ENCODE measurements at regions of chr2 and their contacts with region 1.

Region 1: GRCh38 chr2:17851731-17852585 is 26.5 kb upstream of the KCNS3 start:
- DNase-seq: no peak
- ATAC-seq: peak; percentile 92
- H3K4me3 ChIP-seq: no peak overlapping the region
- H3K27ac ChIP-seq: no peak overlapping the region
- H3K4me1 ChIP-seq: no peaks in the 10 kb centered on the region
- H3K27me3 ChIP-seq: no peaks in the 10 kb centered on the region; a peak in 1 of 4 replicates
- CTCF ChIP-seq: peak; percentile 88 to 90 (median 89)
- EP300 ChIP-seq: no peak
- POLR2A ChIP-seq: no peak
- RAD21 ChIP-seq: peak; percentile 93

Region 2: DNA sequence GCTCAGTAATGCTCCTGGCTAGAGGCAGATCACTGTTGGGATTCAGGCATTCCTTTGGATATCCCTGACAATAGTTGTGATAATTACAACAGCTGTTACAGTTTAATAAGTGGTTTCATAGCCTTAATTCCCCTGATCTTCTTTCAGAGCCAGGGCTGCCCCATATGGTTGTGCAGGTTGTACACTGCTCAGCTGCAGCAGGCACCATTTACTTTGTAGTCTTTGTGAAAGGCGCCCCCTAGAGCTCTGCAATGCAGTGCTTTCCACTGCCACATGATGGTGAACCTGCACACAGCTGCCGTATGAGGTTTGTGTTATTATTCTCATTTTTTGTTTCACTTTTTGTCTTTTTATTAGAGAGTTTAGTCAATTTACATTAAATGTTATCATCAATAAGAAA is 265.6 kb after region 1 on chr2:
- CTCF ChIA-PET with region 1: interaction called, 5 read pairs
- POLR2A ChIA-PET with region 1: no interaction called
- RAD21 ChIA-PET with region 1: no interaction called
- SMC1A ChIA-PET with region 1: no interaction called
- in situ Hi-C with region 1: no loop called
- intact Hi-C with region 1: loop called (anchors 10 kb)
- DNase-seq: no peak
- ATAC-seq: peak; percentile 92
- H3K4me3 ChIP-seq: no peak overlapping the region
- H3K27ac ChIP-seq: no peak overlapping the region
- H3K4me1 ChIP-seq: no peaks in the 10 kb centered on the region
- H3K27me3 ChIP-seq: no peaks in the 10 kb centered on the region; a peak in 1 of 4 replicates
- CTCF ChIP-seq: peak; percentile 52 to 64 (median 54); a peak in 5 of 6 replicates
- EP300 ChIP-seq: no peak
- POLR2A ChIP-seq: no peak
- RAD21 ChIP-seq: peak; percentile 34

Region 3: GRCh38 chr2:18149645-18150246 is 297.8 kb after region 1 on chr2:
- CTCF ChIA-PET with region 1: interaction called, 22 read pairs
- POLR2A ChIA-PET with region 1: no interaction called
- RAD21 ChIA-PET with region 1: interaction called, 5 read pairs
- SMC1A ChIA-PET with region 1: interaction called, 5 read pairs
- in situ Hi-C with region 1: loop called (anchors 5 kb)
- intact Hi-C with region 1: loop called (anchors 1 kb)
- DNase-seq: no peak
- ATAC-seq: peak; percentile 76
- H3K4me3 ChIP-seq: no peak overlapping the region
- H3K27ac ChIP-seq: no peak overlapping the region
- H3K4me1 ChIP-seq: no peaks in the 10 kb centered on the region
- H3K27me3 ChIP-seq: no peaks in the 10 kb centered on the region
- CTCF ChIP-seq: peak; percentile 59 to 67 (median 66)
- EP300 ChIP-seq: no peak
- POLR2A ChIP-seq: no peak
- RAD21 ChIP-seq: peak; percentile 60

Region 4: GRCh38 chr2:18178736-18179349 is 326.9 kb after region 1 on chr2:
- CTCF ChIA-PET with region 1: interaction called, 13 read pairs
- POLR2A ChIA-PET with region 1: no interaction called
- RAD21 ChIA-PET with region 1: interaction called, 4 read pairs
- SMC1A ChIA-PET with region 1: interaction called, 8 read pairs
- in situ Hi-C with region 1: no loop called
- intact Hi-C with region 1: loop called (anchors 2 kb)
- DNase-seq: peak; percentile 13
- ATAC-seq: peak; percentile 97
- H3K4me3 ChIP-seq: no peak overlapping the region
- H3K27ac ChIP-seq: no peak overlapping the region
- H3K4me1 ChIP-seq: no peaks in the 10 kb centered on the region
- H3K27me3 ChIP-seq: no peaks in the 10 kb centered on the region
- CTCF ChIP-seq: peak; percentile 71 to 85 (median 83)
- EP300 ChIP-seq: no peak
- POLR2A ChIP-seq: no peak
- RAD21 ChIP-seq: peak; percentile 70

Region 5: DNA sequence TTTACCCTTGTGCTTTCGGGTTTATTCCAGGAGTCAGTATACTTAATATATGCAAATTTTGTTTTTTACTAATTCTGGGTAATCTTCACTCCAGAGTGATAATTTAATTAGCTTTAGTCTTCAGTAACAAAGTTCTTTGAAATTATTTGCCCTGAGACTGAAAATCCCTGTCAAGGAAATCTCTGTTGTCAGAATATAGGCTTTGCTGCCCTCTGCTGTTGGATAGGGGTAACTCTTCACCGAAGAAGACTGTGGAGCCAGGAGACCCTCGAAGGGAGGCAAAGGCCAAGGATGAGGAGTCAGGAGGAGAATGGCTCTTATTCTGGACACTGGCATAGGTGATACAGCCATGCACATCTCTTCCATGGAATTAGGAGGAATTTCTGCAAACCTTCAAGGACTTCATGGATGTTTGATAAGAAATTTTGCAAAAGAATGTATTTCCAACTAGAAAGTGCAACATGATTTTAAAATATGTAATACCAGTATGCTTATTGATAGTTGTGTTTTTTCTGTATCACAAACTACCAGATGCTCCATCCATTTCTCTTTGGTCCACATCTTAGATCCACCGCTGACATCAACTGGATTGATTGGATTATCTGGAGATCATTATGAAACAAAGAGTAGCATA is 526.2 kb after region 1 on chr2:
- CTCF ChIA-PET with region 1: interaction called, 12 read pairs
- POLR2A ChIA-PET with region 1: no interaction called
- RAD21 ChIA-PET with region 1: no interaction called
- SMC1A ChIA-PET with region 1: interaction called, 3 read pairs
- in situ Hi-C with region 1: loop called (anchors 5 kb)
- intact Hi-C with region 1: loop called (anchors 1 kb)
- DNase-seq: no peak
- ATAC-seq: peak; percentile 86
- H3K4me3 ChIP-seq: no peak overlapping the region
- H3K27ac ChIP-seq: no peak overlapping the region
- H3K4me1 ChIP-seq: no peaks in the 10 kb centered on the region
- H3K27me3 ChIP-seq: peaks cover 0 to 3% of the 10 kb centered on the region in 2 experiments; a peak in 1 of 4 replicates
- CTCF ChIP-seq: peak; percentile 62 to 79 (median 75)
- EP300 ChIP-seq: no peak
- POLR2A ChIP-seq: no peak
- RAD21 ChIP-seq: peak; percentile 58

Measured in GM12878 (cell line).